ENCODE measurements at regions of chr4 and their contacts with region 1.

Region 1: DNA sequence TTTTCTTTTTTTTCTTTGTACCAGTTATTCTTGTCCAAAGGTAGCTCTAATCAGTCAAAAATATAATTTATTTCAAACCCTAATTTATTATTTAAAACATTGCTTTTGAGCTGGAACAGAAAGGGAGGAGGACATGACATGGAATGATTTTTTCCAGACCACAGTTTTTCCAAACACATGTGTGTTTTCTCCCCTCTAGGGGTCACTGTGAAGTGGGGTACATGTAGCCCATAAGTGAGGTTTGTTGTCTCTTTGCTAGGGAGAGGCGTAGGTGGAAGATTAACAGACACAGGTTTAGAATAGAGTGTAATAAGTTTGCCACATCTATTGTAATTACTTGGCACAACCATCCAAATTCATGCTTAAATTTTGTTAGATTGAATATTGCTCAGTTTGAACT is 83.0 kb downstream of the TNIP2 start:
- DNase-seq: no peak
- ATAC-seq: no peak
- H3K4me3 Mint-ChIP-seq: no peak overlapping the region
- H3K27ac Mint-ChIP-seq: peak overlapping the region; percentile 80
- H3K4me1 Mint-ChIP-seq: peaks cover 43% of the 10 kb centered on the region
- H3K27me3 Mint-ChIP-seq: no peaks in the 10 kb centered on the region
- CTCF ChIP-seq: no peak

Region 2: GRCh38 chr4:2696423-2696822 is 23.3 kb after region 1 on chr4:
- CTCF ChIA-PET with region 1: interaction called, 3 read pairs
- POLR2A ChIA-PET with region 1: interaction called, 3 read pairs
- intact Hi-C with region 1: loop called (anchors 2 kb)
- DNase-seq: peak; percentile 72
- ATAC-seq: peak; percentile 90
- H3K4me3 Mint-ChIP-seq: peak overlapping the region; percentile 74
- H3K27ac Mint-ChIP-seq: peak overlapping the region; percentile 96
- H3K4me1 Mint-ChIP-seq: peaks cover 72% of the 10 kb centered on the region
- H3K27me3 Mint-ChIP-seq: no peaks in the 10 kb centered on the region
- CTCF ChIP-seq: no peak

Region 3: GRCh38 chr4:2714061-2714770 is 41.1 kb after region 1 on chr4:
- CTCF ChIA-PET with region 1: no interaction called
- POLR2A ChIA-PET with region 1: no interaction called
- intact Hi-C with region 1: loop called (anchors 2 kb)
- DNase-seq: no peak
- ATAC-seq: no peak
- H3K4me3 Mint-ChIP-seq: no peak overlapping the region
- H3K27ac Mint-ChIP-seq: no peak overlapping the region
- H3K4me1 Mint-ChIP-seq: peaks cover 23% of the 10 kb centered on the region
- H3K27me3 Mint-ChIP-seq: no peaks in the 10 kb centered on the region
- CTCF ChIP-seq: no peak

Measured in activated B cell treated with CpG ODN at 0.5 μM for 24 hours (primary cell).